ENCODE measurements at regions of chr16 and their contacts with region 1.

Region 1: GRCh38 chr16:69796351-69797118 is 34.4 kb downstream of the WWP2 start:
- DNase-seq: no peak
- ATAC-seq: peak; percentile 86

Region 2: GRCh38 chr16:69595127-69596036 is 201.2 kb before region 1 on chr16:
- intact Hi-C with region 1: no loop called
- DNase-seq: no peak
- ATAC-seq: peak; percentile 29

Region 3: GRCh38 chr16:69669577-69669976 is 127.0 kb before region 1 on chr16:
- intact Hi-C with region 1: no loop called
- DNase-seq: no peak
- ATAC-seq: no peak

Region 4: DNA sequence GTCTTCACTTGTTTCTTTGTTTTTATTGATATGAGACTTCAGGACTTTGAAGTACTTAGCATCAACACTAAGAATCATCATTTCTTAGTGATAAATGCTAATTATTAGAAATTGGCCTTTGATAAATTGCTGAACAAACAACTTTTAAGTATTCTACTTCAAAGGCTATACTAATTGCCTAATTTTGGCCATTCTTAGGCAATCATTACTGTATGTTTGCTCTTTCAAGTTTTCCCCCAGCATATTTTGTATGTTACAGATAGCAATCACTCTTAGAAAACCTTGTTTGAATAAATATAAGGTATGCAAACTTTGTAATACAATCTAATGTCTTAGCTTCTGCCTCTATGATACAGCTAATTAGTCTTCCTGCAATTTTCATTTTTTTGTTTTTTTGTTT is 116.2 kb before region 1 on chr16:
- intact Hi-C with region 1: no loop called
- DNase-seq: no peak
- ATAC-seq: no peak

Region 5: DNA sequence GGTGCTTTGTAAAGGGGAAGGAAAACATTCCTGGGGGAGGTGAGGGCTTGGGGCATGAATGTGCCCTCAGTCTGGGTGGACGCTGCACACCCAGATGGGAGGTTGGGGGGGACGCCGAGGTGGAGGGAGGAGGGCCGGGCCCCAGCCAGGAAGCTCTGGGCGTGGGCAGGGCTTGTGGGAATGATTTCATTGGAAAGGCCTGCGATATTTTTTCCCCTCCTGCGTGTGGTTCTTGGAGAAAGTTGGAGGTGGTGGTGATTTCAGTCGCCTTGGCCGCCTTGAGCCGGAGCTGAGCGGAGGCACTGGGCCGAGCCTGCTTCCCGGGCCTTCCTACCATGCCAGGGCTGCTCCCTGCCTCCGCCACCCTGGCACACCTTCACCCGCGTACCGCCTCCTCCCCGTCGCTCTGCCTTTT is 128.2 kb after region 1 on chr16:
- intact Hi-C with region 1: loop called in 1 of 2 experiments (anchors 5 kb)
- DNase-seq: no peak
- ATAC-seq: no peak

Region 6: GRCh38 chr16:69930117-69930776 is 133.7 kb after region 1 on chr16:
- intact Hi-C with region 1: loop called (anchors 2 to 5 kb)
- DNase-seq: peak in 1 of 2 donors; percentile 47
- ATAC-seq: peak; percentile 80